Activated CD4-positive, alpha-beta T cell treated with anti-CD3 and anti-CD28 coated beads, Interleukin-2, amount 10 ng/mL, durations not matched to agents 24 days and 14 days (primary cell): ENCODE measurements at regions of chr9 and their contacts with region 1.

Region 1: DNA sequence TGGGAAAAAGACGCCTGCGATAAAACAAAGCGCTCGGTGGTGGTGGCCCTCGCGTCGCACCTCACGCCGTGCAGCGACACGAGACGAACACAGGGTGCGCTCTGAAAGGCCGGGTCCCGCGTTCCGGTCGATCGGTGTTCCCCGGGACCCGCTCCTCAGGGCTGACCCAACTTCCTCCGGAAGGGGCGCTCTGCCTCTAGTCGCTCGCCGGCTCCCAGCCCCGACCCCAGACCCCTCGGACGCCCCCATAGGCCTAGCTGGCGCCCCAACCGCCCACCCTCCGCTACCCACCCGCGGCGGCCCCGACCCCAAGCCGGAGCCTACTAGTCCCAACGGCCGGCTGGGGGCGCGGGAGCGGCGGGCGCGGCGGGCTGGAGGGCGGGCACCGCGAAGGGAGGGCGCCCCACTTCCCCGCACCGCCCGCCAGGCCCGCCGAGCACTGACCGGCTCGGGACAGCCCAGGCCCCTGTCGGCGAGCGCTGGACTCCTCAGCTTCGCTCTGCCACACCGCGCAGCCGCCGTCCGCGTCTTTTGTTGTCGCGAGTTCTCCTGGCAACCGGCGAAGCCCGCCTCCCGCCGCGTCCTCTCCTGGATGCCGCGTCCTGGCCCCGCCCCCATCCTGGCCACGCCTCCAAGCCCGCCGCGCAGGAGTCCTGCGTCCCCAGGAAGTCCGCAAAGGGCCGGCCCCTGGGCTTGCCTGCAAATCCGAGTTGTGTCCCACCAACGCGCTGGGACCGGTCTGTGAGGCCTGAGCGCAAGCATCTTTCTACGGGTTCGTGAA is at the start of gene KIF27:
- DNase-seq: peak; percentile 100
- H3K4me3 Mint-ChIP-seq: peak within 1 kb of the TSS; percentile 87
- H3K27ac Mint-ChIP-seq: peak within 1 kb of the TSS; percentile 93
- H3K4me1 Mint-ChIP-seq: peaks cover 11% of the 10 kb centered on the region
- H3K27me3 Mint-ChIP-seq: no peaks in the 10 kb centered on the region
- total RNA-seq, gene KIF27: 2.4 and 2.7 TPM in 2 replicates

Region 2: GRCh38 chr9:83024506-83025503 is 896.3 kb before region 1 on chr9:
- intact Hi-C with region 1: no loop called
- DNase-seq: no peak
- H3K4me3 Mint-ChIP-seq: no peak overlapping the region
- H3K27ac Mint-ChIP-seq: no peak overlapping the region
- H3K4me1 Mint-ChIP-seq: no peaks in the 10 kb centered on the region
- H3K27me3 Mint-ChIP-seq: no peaks in the 10 kb centered on the region

Region 3: DNA sequence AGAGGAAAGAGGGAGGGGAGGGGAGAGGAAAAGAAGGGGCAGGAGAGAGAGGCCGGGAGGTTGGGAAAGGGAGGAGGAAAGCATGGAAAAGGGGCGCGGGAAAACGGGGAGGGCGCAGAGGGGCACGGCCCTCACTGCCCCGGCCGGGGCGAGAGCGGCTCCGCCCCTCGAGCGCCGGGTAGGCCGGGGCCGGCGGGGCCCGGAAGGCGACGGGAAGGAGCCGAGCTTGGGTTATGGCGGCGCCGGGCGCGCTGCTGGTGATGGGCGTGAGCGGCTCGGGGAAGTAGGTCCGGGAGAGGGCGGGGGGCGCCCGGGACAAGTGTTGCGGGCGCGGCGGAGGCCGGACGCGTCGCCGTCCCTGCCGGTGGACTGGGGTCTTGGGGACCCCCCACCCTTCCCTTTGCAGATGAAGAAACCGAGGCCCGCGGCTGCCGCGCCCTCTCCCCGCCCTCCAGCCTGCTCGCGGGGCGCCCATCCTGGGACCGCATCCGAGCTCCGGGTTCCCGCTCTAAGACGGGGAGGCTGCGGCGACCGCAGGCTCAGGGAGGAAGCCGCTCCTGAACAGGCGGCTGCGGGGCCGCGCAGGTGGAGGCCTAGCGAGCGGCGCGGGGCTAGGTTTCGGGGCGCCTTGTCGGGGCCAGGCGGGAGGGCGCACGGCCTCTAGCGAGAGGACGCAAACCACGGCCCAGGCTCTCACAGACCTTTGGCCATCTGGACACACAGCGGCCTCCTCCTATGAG is 298.0 kb before region 1 on chr9 and contains the start of gene IDNK:
- intact Hi-C with region 1: loop called (anchors 1 kb)
- DNase-seq: peak; percentile 92
- H3K4me3 Mint-ChIP-seq: peak within 1 kb of the TSS; percentile 79
- H3K27ac Mint-ChIP-seq: peak within 1 kb of the TSS; percentile 95
- H3K4me1 Mint-ChIP-seq: peaks cover 23% of the 10 kb centered on the region
- H3K27me3 Mint-ChIP-seq: peaks cover 7% of the 10 kb centered on the region
- total RNA-seq, gene IDNK: 4.5 and 5.1 TPM in 2 replicates

Region 4: GRCh38 chr9:83707768-83708514 is 213.2 kb before region 1 on chr9 and contains the start of gene UBQLN1:
- intact Hi-C with region 1: loop called (anchors 1 kb)
- DNase-seq: peak; percentile 97
- H3K4me3 Mint-ChIP-seq: peak within 1 kb of the TSS; percentile 87
- H3K27ac Mint-ChIP-seq: peak within 1 kb of the TSS; percentile 99
- H3K4me1 Mint-ChIP-seq: peaks cover 26% of the 10 kb centered on the region
- H3K27me3 Mint-ChIP-seq: no peaks in the 10 kb centered on the region
- total RNA-seq, gene UBQLN1: 131 and 144 TPM in 2 replicates

Region 5: DNA sequence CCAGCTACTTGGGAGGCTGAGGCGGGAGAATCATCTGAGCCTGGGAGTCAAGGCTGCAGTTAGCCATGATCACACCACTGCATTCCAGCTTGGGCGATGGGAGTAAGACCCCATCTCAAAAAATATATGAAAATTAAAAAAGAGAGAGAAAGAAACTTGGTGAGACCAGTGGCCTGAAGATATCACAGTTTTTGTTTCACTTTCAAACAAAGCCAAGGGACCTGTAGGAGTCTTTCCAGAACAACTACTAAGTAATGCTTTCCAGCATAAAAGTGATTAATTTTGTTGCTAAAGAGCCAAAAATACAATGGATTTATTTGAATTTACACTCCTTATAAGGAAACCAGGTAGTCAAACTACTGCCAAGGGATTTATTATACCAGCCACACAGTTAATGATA is 127.1 kb before region 1 on chr9:
- intact Hi-C with region 1: no loop called
- DNase-seq: no peak
- H3K4me3 Mint-ChIP-seq: no peak overlapping the region
- H3K27ac Mint-ChIP-seq: no peak overlapping the region
- H3K4me1 Mint-ChIP-seq: peaks cover 5% of the 10 kb centered on the region
- H3K27me3 Mint-ChIP-seq: no peaks in the 10 kb centered on the region

Region 6: DNA sequence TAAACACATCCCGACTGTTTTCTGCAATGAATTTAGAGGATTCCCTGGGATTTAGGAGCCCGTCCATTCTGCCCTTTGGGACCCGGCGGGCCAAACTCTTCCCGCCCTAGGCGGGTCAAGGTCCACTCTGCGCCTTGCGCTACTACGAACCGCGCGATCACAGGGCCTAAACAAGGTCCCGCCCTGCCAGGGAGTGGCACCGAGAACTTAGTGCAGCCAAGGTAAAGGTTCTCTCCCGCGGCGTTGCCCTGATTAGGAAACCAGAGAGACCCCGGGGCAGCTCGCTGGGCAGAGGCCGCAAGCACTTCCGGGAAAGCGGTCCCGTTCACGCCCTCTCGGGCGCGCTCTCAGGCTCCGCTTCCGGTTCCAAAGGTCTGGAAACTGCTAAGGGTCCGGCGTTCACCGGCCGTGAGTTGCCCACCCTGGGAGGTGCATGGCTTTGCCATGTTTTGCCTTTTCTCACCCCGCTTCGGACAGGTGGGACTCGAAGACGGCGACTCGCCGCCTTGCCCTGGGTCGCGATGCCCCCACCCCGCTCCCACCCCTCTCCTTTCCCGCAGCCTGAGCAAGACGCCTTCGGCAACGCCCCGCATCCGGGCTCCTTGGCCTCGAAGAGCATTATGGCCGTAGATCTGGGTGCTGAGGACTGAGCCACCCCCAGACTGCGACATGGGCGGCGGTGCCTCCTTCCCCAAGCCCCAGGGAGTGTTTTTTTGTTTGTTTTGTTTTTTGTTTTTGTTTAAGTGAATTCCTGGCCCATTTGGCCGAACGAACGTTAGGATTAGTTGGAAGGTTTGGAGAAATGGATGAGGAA is 35.5 kb after region 1 on chr9:
- intact Hi-C with region 1: loop called (anchors 1 kb)
- DNase-seq: peak; percentile 92
- H3K4me3 Mint-ChIP-seq: peak overlapping the region; percentile 99
- H3K27ac Mint-ChIP-seq: peak overlapping the region; percentile 97
- H3K4me1 Mint-ChIP-seq: peaks cover 12% of the 10 kb centered on the region
- H3K27me3 Mint-ChIP-seq: no peaks in the 10 kb centered on the region

Region 7: DNA sequence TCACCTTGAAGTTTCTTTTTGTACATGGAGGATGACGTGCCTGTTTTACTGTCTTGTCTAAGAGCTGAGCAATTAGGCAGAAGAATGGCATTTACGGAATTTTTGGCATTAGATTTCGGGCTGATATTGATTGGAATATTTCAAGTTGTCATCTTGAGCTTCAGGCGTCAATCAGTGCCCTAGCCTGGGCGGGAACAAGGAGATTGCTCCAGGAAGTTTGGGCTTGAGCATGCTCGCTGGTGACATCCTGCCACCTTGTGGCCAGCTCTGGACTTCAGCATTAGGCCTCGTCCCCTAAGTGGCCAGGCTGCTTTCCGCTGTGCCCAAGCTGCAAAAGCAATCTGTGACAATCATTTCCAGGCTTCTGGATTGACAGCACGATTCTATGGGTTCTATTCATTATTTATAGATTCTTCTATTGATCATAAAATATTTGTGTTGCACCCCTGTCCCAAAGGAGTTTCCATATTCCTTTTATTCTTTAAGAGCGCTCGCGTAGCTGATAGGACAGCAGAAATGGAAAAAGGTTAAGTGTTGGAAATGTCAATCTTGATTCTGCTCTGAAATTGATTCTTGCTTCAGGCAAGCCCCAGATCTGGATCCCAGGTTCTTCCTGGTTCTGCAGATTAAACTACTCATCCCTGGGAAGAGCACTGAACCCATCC is 340.1 kb after region 1 on chr9:
- intact Hi-C with region 1: loop called (anchors 5 kb)
- DNase-seq: peak; percentile 86
- H3K4me3 Mint-ChIP-seq: peak overlapping the region; percentile 44
- H3K27ac Mint-ChIP-seq: no peak overlapping the region
- H3K4me1 Mint-ChIP-seq: peaks cover 9% of the 10 kb centered on the region
- H3K27me3 Mint-ChIP-seq: peaks cover 14% of the 10 kb centered on the region

Region 8: GRCh38 chr9:84315278-84315877 is 394.3 kb after region 1 on chr9:
- intact Hi-C with region 1: loop called (anchors 5 kb)
- DNase-seq: peak; percentile 89
- H3K4me3 Mint-ChIP-seq: no peak overlapping the region
- H3K27ac Mint-ChIP-seq: no peak overlapping the region
- H3K4me1 Mint-ChIP-seq: peaks cover 19% of the 10 kb centered on the region
- H3K27me3 Mint-ChIP-seq: no peaks in the 10 kb centered on the region